MCF 10A (cell line): ENCODE measurements at regions of chr1 and their contacts with region 1.

Region 1: GRCh38 chr1:152654110-152654509 is 9.1 kb upstream of the LCE2D start:
- DNase-seq: peak; percentile 91
- H3K4me3 Mint-ChIP-seq: no peak overlapping the region
- H3K27ac Mint-ChIP-seq: no peak overlapping the region
- H3K4me1 Mint-ChIP-seq: no peaks in the 10 kb centered on the region
- H3K27me3 Mint-ChIP-seq: no peaks in the 10 kb centered on the region
- CTCF ChIP-seq: peak; percentile 87

Region 2: DNA sequence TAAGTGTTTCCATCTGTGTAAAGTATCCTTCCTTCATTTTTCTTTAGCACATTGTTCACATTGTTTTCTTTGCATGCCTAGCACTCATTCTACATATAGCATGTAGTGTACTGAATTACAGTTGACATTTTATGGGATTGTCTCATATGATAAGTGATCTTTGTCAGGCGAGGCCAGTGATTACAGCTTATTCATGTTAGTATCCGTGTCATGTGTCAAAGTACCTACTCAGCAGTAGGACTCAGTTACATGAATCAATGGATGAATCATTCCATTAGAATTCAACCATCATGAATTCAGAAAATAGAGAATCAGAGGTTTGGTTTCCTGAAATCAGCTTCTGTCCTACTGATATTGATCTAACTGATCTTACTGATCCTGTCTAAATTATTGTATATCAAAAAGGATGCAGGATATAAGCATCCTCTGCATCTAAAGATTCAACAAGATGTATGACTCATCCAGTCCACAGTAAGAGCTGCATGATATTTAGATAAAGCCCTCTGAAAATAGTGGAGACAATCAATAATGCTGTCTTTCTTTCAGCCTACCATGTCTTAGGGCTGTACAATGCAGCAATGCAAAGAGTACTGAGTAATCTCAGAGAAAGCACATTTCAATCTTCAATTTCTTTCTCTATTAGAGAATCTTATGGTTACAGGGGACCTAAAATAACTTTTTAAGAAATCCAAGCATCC is 409.4 kb before region 1 on chr1:
- CTCF ChIA-PET with region 1: no interaction called
- POLR2A ChIA-PET with region 1: no interaction called
- intact Hi-C with region 1: no loop called
- DNase-seq: peak; percentile 24
- H3K4me3 Mint-ChIP-seq: no peak overlapping the region
- H3K27ac Mint-ChIP-seq: no peak overlapping the region
- H3K4me1 Mint-ChIP-seq: peaks cover 6% of the 10 kb centered on the region
- H3K27me3 Mint-ChIP-seq: no peaks in the 10 kb centered on the region
- CTCF ChIP-seq: no peak

Region 3: DNA sequence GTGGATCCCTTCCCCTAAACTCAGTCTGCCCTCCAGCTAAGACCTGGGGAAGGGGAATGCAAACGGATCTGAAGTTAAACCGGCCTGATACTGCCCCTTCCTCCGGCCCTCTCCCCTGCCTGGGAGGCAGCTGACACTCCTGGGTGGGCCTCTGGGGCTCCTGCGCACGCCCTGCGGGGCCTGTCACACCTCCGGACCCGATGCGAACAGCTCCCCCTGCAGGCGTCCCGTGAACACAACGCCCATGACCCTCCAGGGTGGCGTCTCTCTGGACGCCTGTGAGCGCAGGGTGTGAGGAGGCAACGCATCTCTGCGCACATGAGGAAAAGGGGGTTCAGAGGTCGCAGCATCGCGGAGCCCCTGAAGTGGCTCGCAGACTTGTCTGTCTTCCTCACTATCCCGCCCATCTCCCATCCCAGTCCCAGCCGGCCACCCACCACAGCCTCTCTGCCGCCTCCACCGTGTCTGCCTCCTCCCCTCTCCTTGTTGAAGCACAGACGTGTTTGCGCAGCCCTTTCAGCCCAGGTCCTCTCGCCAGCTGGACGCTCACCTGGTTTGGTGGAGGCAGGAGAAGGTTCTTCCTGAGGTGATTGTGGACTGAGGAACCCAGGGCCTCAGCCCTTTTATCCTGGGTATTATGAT is 30.8 kb before region 1 on chr1:
- CTCF ChIA-PET with region 1: interaction called, 16 read pairs
- POLR2A ChIA-PET with region 1: interaction called, 3 read pairs
- intact Hi-C with region 1: no loop called
- DNase-seq: no peak
- H3K4me3 Mint-ChIP-seq: no peak overlapping the region
- H3K27ac Mint-ChIP-seq: no peak overlapping the region
- H3K4me1 Mint-ChIP-seq: peaks cover 8% of the 10 kb centered on the region
- H3K27me3 Mint-ChIP-seq: no peaks in the 10 kb centered on the region
- CTCF ChIP-seq: peak; percentile 46

Region 4: GRCh38 chr1:152728978-152729377 is 74.9 kb after region 1 on chr1:
- CTCF ChIA-PET with region 1: interaction called, 64 read pairs
- POLR2A ChIA-PET with region 1: no interaction called
- intact Hi-C with region 1: no loop called
- DNase-seq: no peak
- H3K4me3 Mint-ChIP-seq: no peak overlapping the region
- H3K27ac Mint-ChIP-seq: no peak overlapping the region
- H3K4me1 Mint-ChIP-seq: no peaks in the 10 kb centered on the region
- H3K27me3 Mint-ChIP-seq: no peaks in the 10 kb centered on the region
- CTCF ChIP-seq: no peak

Region 5: GRCh38 chr1:152752217-152752616 is 98.1 kb after region 1 on chr1:
- CTCF ChIA-PET with region 1: interaction called, 14 read pairs
- POLR2A ChIA-PET with region 1: interaction called, 4 read pairs
- intact Hi-C with region 1: no loop called
- DNase-seq: peak; percentile 74
- H3K4me3 Mint-ChIP-seq: no peak overlapping the region
- H3K27ac Mint-ChIP-seq: no peak overlapping the region
- H3K4me1 Mint-ChIP-seq: peaks cover 12% of the 10 kb centered on the region
- H3K27me3 Mint-ChIP-seq: no peaks in the 10 kb centered on the region
- CTCF ChIP-seq: no peak

Region 6: GRCh38 chr1:152801333-152801732 is 147.2 kb after region 1 on chr1:
- CTCF ChIA-PET with region 1: interaction called, 12 read pairs
- POLR2A ChIA-PET with region 1: no interaction called
- intact Hi-C with region 1: no loop called
- DNase-seq: peak; percentile 3
- H3K4me3 Mint-ChIP-seq: no peak overlapping the region
- H3K27ac Mint-ChIP-seq: no peak overlapping the region
- H3K4me1 Mint-ChIP-seq: peaks cover 8% of the 10 kb centered on the region
- H3K27me3 Mint-ChIP-seq: no peaks in the 10 kb centered on the region
- CTCF ChIP-seq: no peak

Region 7: GRCh38 chr1:153032677-153033308 is 378.7 kb after region 1 on chr1:
- CTCF ChIA-PET with region 1: interaction called, 6 read pairs
- POLR2A ChIA-PET with region 1: no interaction called
- intact Hi-C with region 1: loop called (anchors 10 kb)
- DNase-seq: peak; percentile 97
- H3K4me3 Mint-ChIP-seq: no peak overlapping the region
- H3K27ac Mint-ChIP-seq: peak overlapping the region; percentile 25
- H3K4me1 Mint-ChIP-seq: peaks cover 12% of the 10 kb centered on the region
- H3K27me3 Mint-ChIP-seq: no peaks in the 10 kb centered on the region
- CTCF ChIP-seq: peak; percentile 68